MCF 10A (cell line): ENCODE measurements at regions of chr3 and their contacts with region 1.

Region 1: GRCh38 chr3:25664810-25665314 is at the start of gene TOP2B:
- DNase-seq: peak; percentile 95
- H3K4me3 Mint-ChIP-seq: peak within 1 kb of the TSS; percentile 99
- H3K27ac Mint-ChIP-seq: peak within 1 kb of the TSS; percentile 96
- H3K4me1 Mint-ChIP-seq: peaks cover 23% of the 10 kb centered on the region
- H3K27me3 Mint-ChIP-seq: no peaks in the 10 kb centered on the region
- CTCF ChIP-seq: no peak
- total RNA-seq, gene TOP2B: 77.8 and 88.7 TPM in 2 replicates

Region 2: GRCh38 chr3:25713335-25713985 is 48.6 kb after region 1 on chr3:
- CTCF ChIA-PET with region 1: no interaction called
- POLR2A ChIA-PET with region 1: no interaction called
- intact Hi-C with region 1: no loop called
- DNase-seq: peak; percentile 13
- H3K4me3 Mint-ChIP-seq: no peak overlapping the region
- H3K27ac Mint-ChIP-seq: no peak overlapping the region
- H3K4me1 Mint-ChIP-seq: no peaks in the 10 kb centered on the region
- H3K27me3 Mint-ChIP-seq: no peaks in the 10 kb centered on the region
- CTCF ChIP-seq: no peak

Region 3: GRCh38 chr3:25782938-25783660 is 118.2 kb after region 1 on chr3 and contains the start of gene NGLY1:
- CTCF ChIA-PET with region 1: interaction called, 8 read pairs
- POLR2A ChIA-PET with region 1: interaction called, 41 read pairs
- intact Hi-C with region 1: loop called (anchors 2 kb)
- DNase-seq: peak; percentile 75
- H3K4me3 Mint-ChIP-seq: peak within 1 kb of the TSS; percentile 84
- H3K27ac Mint-ChIP-seq: peak within 1 kb of the TSS; percentile 31
- H3K4me1 Mint-ChIP-seq: peaks cover 26% of the 10 kb centered on the region
- H3K27me3 Mint-ChIP-seq: no peaks in the 10 kb centered on the region
- CTCF ChIP-seq: no peak
- total RNA-seq, gene NGLY1: 36.6 and 45.4 TPM in 2 replicates

Region 4: DNA sequence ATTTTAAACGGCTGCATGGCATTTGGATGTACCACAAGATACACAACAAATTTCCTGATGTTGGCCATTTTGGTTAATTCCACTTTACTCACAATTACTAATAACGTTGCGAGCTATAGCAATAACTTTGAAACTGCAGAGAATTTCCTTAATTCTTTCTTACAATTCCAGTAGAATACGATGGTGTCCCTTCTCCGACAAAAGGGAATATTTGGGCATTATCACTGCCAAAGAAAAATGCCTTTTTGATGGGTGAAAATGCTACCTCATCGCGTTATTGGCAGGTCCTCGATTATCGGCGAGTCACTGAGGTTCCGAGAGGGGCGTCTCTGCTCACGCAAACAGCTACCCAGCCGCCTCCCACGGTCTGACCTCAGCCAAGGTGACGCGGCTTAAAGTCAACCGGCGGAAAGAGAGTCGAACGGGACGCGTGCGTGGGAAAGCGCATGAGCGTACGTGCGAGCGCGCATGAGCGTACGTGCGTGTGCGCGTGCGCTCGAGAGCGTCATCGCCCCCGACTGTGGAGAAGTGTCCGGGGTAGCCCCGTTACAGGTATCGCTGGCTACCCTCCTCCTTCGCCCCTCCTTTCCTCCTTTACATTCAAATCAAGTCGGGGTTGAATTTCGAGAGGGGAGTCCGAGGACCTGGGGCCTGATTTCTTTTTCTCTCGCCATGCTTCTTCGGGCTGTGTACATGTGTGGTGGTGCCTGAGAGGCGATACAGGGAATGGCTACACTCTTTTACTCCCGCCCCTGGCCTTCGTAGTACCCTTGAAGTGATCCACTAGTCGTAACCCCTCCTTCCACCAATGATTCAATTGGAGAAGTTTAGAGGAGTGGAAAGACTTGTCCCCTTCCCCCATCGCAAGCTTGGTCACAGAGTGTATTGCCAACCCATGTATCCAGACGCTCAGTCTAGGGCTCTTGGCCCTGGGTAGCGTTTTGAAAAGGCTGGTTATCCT is 125.0 kb after region 1 on chr3 and contains the start of gene OXSM:
- CTCF ChIA-PET with region 1: interaction called, 8 read pairs
- POLR2A ChIA-PET with region 1: interaction called, 41 read pairs
- intact Hi-C with region 1: no loop called
- DNase-seq: peak; percentile 88
- H3K4me3 Mint-ChIP-seq: peak within 1 kb of the TSS; percentile 85
- H3K27ac Mint-ChIP-seq: peak within 1 kb of the TSS; percentile 94
- H3K4me1 Mint-ChIP-seq: peaks cover 32% of the 10 kb centered on the region
- H3K27me3 Mint-ChIP-seq: no peaks in the 10 kb centered on the region
- CTCF ChIP-seq: no peak
- total RNA-seq, gene OXSM: 21.7 and 22.4 TPM in 2 replicates

Region 5: DNA sequence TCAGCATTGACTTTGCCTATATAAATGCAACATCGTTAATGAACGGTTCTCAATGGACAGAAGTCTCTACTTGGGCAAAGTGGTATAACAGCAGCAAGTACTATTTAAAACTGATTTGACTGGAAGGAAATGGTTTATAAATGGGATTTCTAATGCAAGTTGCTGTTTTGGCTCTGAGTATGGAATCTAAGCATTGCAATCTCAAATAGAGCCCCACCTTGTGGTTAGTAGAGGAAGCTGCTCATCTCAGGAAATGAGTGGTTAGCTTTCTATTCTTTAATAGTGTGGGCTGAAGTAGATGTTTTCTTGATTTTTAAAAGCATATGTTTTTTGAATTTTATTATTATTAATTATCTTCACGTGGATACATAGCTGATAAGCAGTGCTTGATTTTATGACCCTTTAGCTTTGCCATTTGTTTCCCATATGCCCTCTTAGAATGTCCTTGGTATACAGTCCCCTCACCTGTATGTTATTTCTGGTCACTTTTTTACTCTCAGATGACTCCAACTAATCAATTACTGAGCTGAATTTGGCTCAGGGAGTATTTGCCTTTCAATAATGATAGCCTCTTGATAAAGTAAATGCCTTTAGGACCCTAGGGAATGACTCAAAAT is 192.1 kb after region 1 on chr3:
- CTCF ChIA-PET with region 1: no interaction called
- POLR2A ChIA-PET with region 1: no interaction called
- intact Hi-C with region 1: loop called (anchors 5 kb)
- DNase-seq: peak; percentile 49
- H3K4me3 Mint-ChIP-seq: no peak overlapping the region
- H3K27ac Mint-ChIP-seq: no peak overlapping the region
- H3K4me1 Mint-ChIP-seq: peaks cover 9% of the 10 kb centered on the region
- H3K27me3 Mint-ChIP-seq: no peaks in the 10 kb centered on the region
- CTCF ChIP-seq: peak; percentile 59

Region 6: DNA sequence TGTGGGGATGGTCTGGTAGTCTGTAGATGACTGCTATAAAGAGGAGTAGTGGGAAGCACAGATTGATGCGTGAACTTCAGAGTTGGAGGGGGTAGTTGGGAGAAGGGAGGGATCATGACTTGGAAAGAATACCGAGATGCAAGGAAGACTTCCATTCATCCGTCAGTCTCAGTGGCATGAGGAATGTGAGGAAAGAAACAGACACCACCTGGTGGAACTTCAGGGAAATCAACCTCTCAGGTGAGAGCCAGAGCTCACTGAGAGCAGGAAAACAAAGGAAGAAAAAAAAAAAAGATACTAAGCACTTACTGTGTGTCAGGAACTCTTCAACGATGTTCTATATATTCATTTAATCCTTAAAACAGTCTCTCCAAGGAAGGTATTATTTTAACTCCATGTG is 297.4 kb after region 1 on chr3:
- CTCF ChIA-PET with region 1: interaction called, 6 read pairs
- POLR2A ChIA-PET with region 1: no interaction called
- intact Hi-C with region 1: loop called (anchors 5 kb)
- DNase-seq: peak; percentile 45
- H3K4me3 Mint-ChIP-seq: no peak overlapping the region
- H3K27ac Mint-ChIP-seq: no peak overlapping the region
- H3K4me1 Mint-ChIP-seq: no peaks in the 10 kb centered on the region
- H3K27me3 Mint-ChIP-seq: no peaks in the 10 kb centered on the region
- CTCF ChIP-seq: peak; percentile 48